Psoas muscle (tissue), 8 donors: ENCODE measurements at regions of chr10 and their contacts with region 1.

Region 1: GRCh38 chr10:113385021-113385999 is 167.5 kb upstream of the HABP2 start:
- DNase-seq: peak; percentile 85 to 87
- ATAC-seq: peak; percentile 94 to 99 (median 96)
- H3K4me3 ChIP-seq: no peak overlapping the region
- H3K27ac ChIP-seq: peak overlapping the region; percentile 21
- H3K4me1 ChIP-seq: no peaks in the 10 kb centered on the region
- H3K27me3 ChIP-seq: no peaks in the 10 kb centered on the region
- CTCF ChIP-seq: peak; percentile 84

Region 2: GRCh38 chr10:112471878-112472487 is 913.3 kb before region 1 on chr10:
- intact Hi-C with region 1: loop called in 1 of 2 experiments (anchors 5 kb)
- DNase-seq: no peak
- ATAC-seq: peak in 3 of 4 donors; percentile 71 to 85 (median 72)
- H3K4me3 ChIP-seq: no peak overlapping the region
- H3K27ac ChIP-seq: no peak overlapping the region
- H3K4me1 ChIP-seq: no peaks in the 10 kb centered on the region
- H3K27me3 ChIP-seq: no peaks in the 10 kb centered on the region
- CTCF ChIP-seq: peak; percentile 69

Region 3: GRCh38 chr10:112565434-112566053 is 819.8 kb before region 1 on chr10:
- intact Hi-C with region 1: loop called in 1 of 2 experiments (anchors 5 kb)
- DNase-seq: no peak
- ATAC-seq: peak in 1 of 4 donors; percentile 72
- H3K4me3 ChIP-seq: no peak overlapping the region
- H3K27ac ChIP-seq: no peak overlapping the region
- H3K4me1 ChIP-seq: peaks cover 3% of the 10 kb centered on the region
- H3K27me3 ChIP-seq: no peaks in the 10 kb centered on the region
- CTCF ChIP-seq: peak; percentile 55

Region 4: DNA sequence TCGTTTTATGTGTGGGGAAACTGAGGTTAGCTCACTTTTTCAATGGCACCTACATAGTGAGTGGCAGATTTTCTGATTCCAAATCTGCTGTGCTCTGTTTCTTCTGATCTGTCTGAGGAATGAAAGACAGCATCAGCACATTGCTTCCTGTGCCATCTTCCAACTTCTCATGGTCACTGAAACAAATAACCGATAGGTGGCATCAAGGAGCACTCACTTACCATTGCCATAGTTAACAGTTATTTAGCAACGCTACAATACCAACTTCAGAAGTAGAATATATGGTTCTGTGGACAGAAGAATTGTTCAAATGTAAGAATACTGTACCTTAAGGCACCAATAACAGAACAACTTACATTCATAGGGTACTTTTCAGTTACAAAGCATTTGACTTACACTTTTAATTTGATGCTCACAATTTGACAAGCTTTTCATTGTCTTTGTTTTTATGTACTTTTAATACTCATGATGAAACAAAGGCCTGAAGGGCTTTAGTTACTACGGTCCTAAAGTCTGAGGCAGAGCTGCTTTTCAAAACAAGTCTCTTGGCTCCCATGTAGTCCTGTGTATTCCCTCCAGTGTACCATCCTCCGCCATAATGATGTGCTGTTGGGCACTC is 664.1 kb before region 1 on chr10:
- intact Hi-C with region 1: loop called (anchors 5 to 10 kb)
- DNase-seq: no peak
- ATAC-seq: peak in 2 of 4 donors; percentile 54 to 80
- H3K4me3 ChIP-seq: no peak overlapping the region
- H3K27ac ChIP-seq: no peak overlapping the region
- H3K4me1 ChIP-seq: no peaks in the 10 kb centered on the region
- H3K27me3 ChIP-seq: no peaks in the 10 kb centered on the region
- CTCF ChIP-seq: peak; percentile 68

Region 5: DNA sequence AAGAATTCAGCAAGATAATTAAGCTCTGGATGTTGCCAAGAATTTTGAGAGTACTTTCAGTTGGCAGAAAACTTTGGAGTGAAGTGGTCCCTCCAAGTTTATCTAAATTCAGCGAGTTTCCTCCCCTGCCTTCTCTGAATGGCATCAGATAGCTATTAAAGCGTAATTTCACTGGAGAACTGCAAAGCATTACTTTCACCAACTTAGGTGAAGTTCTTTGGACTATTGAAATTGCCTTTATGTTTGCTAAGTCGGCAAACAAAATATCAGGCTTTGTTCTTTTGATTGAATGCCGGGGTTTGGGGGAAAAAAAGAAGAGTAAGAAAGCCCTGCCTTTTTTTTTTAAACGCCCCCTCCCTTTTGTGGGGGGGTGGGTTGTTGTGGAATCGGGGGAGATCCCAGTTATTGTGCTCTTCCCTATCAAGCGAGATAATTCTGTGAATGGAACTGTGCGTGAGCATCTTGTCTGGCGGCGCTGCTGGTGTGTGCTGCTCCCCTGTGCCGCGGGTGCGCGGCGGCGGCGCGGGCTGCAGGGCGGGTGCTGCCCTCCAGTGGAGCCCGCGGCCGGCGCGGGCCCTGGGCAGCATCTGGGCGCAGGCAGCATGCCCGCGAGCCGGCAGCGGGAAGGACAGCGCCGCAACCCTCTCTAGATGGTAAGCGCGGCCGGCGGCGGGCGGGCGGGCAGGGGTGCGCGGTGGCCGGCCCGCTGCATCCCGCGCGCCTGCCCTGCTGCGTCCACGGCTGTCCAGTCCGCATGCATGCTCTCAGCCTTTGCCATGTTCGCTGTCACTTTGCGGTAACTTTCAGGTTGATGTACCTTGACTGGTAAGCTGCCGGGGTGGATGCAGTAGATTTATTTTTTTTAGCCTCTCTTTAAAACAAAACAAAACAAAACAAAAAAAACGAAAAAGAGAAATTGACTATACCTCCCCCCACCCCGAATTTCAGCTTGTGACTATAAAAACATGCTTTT is 258.8 kb before region 1 on chr10:
- intact Hi-C with region 1: loop called in 1 of 2 experiments (anchors 2 kb)
- DNase-seq: peak; percentile 73 to 83
- ATAC-seq: peak; percentile 97 to 99 (median 98)
- H3K4me3 ChIP-seq: peak overlapping the region; percentile 42
- H3K27ac ChIP-seq: no peak overlapping the region
- H3K4me1 ChIP-seq: peaks cover 4% of the 10 kb centered on the region
- H3K27me3 ChIP-seq: no peaks in the 10 kb centered on the region
- CTCF ChIP-seq: peak; percentile 88

Region 6: DNA sequence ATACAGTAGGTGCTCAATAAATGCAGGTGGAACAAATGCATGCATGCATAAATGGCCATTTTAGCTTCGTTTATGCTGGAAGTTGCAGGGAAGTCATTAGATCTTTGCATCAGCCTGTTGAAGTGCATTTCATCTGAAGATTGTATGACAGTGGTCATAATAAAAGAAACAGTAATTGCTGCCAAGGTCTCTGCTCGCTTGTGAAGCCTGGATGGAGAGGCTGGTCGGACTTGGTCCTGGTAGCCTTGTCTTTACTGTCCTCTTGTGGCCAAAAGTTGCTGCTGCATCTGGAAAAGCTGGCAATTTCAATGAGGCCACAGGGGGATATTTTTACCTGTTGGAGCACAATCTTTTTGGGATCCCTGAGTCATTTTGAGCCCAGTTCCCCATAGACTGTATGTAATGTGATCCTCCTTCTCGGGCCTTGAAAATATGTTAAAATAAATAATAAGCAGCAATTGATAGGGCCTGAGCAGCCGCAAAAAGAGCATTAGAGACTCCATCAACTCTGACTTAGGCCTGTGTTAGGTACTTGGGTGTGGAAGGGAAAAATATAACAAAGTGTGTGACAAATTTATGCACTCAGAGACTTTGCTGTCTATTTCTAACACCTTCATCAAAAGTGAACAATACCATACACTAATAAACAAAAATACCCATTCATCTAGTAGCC is 135.9 kb after region 1 on chr10:
- intact Hi-C with region 1: loop called in 1 of 2 experiments (anchors 5 kb)
- DNase-seq: peak; percentile 51 to 75
- ATAC-seq: peak; percentile 85 to 98 (median 95)
- H3K4me3 ChIP-seq: no peak overlapping the region
- H3K27ac ChIP-seq: no peak overlapping the region
- H3K4me1 ChIP-seq: peaks cover 8% of the 10 kb centered on the region
- H3K27me3 ChIP-seq: peaks cover 0 to 1% (median 0%) of the 10 kb centered on the region in 3 donors
- CTCF ChIP-seq: peak; percentile 97

Region 7: GRCh38 chr10:113563306-113564088 is 178.2 kb after region 1 on chr10:
- intact Hi-C with region 1: loop called in 1 of 2 experiments (anchors 5 kb)
- DNase-seq: peak; percentile 73 to 89
- ATAC-seq: peak; percentile 88 to 95 (median 89)
- H3K4me3 ChIP-seq: peak overlapping the region; percentile 46
- H3K27ac ChIP-seq: no peak overlapping the region
- H3K4me1 ChIP-seq: peaks cover 30% of the 10 kb centered on the region
- H3K27me3 ChIP-seq: no peaks in the 10 kb centered on the region
- CTCF ChIP-seq: peak; percentile 99

Region 8: GRCh38 chr10:113661332-113661731 is 276.0 kb after region 1 on chr10:
- intact Hi-C with region 1: no loop called
- DNase-seq: no peak
- ATAC-seq: peak; percentile 64 to 81 (median 72)
- H3K4me3 ChIP-seq: peak overlapping the region; percentile 63
- H3K27ac ChIP-seq: peak overlapping the region; percentile 98
- H3K4me1 ChIP-seq: peaks cover 48% of the 10 kb centered on the region
- H3K27me3 ChIP-seq: no peaks in the 10 kb centered on the region
- CTCF ChIP-seq: no peak